ENCODE measurements at regions of chr1 and their contacts with region 1.

Region 1: DNA sequence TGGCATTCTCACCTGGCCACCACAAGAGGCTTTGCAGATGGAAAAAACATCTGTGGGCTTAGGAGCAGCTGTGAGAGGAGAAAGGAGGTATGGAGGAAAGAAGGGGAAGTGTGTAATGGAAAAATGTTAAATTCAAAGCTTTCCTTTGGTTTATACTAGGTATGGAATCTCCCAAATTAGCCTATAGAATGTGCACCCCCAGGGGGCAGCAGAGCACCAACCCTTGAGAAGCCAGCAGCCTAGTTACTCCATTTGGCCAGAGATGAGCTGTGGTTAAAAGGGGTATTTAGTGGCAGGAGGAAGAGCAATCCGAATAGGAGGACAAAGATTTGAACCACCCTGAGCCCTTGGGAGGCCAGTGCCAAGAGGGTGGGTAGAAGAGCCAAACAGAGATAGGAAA is 97.5 kb upstream of the CTTNBP2NL start:
- DNase-seq: peak; percentile 79
- ATAC-seq: peak; percentile 90
- H3K4me3 Mint-ChIP-seq: no peak overlapping the region
- H3K27ac Mint-ChIP-seq: no peak overlapping the region
- H3K4me1 Mint-ChIP-seq: no peaks in the 10 kb centered on the region
- H3K27me3 Mint-ChIP-seq: no peaks in the 10 kb centered on the region; the same call in 1 of the 2 replicates
- CTCF ChIP-seq: peak; percentile 65

Region 2: GRCh38 chr1:112272101-112272772 is 26.3 kb before region 1 on chr1:
- CTCF ChIA-PET with region 1: interaction called, 39 read pairs
- POLR2A ChIA-PET with region 1: no interaction called
- DNase-seq: no peak
- ATAC-seq: no peak
- H3K4me3 Mint-ChIP-seq: no peak overlapping the region
- H3K27ac Mint-ChIP-seq: no peak overlapping the region
- H3K4me1 Mint-ChIP-seq: no peaks in the 10 kb centered on the region
- H3K27me3 Mint-ChIP-seq: peaks cover 24% of the 10 kb centered on the region
- CTCF ChIP-seq: no peak

Region 3: GRCh38 chr1:112312315-112312714 is 13.8 kb after region 1 on chr1:
- CTCF ChIA-PET with region 1: interaction called, 33 read pairs
- POLR2A ChIA-PET with region 1: no interaction called
- DNase-seq: no peak
- ATAC-seq: peak; percentile 43; the same call in 1 of the 2 replicates
- H3K4me3 Mint-ChIP-seq: no peak overlapping the region
- H3K27ac Mint-ChIP-seq: no peak overlapping the region
- H3K4me1 Mint-ChIP-seq: peaks cover 27% of the 10 kb centered on the region
- H3K27me3 Mint-ChIP-seq: no peaks in the 10 kb centered on the region; the same call in 1 of the 2 replicates
- CTCF ChIP-seq: no peak

Region 4: GRCh38 chr1:112337028-112337531 is 38.5 kb after region 1 on chr1:
- CTCF ChIA-PET with region 1: interaction called, 49 read pairs
- POLR2A ChIA-PET with region 1: no interaction called
- DNase-seq: peak; percentile 44
- ATAC-seq: peak; percentile 80
- H3K4me3 Mint-ChIP-seq: no peak overlapping the region
- H3K27ac Mint-ChIP-seq: no peak overlapping the region
- H3K4me1 Mint-ChIP-seq: no peaks in the 10 kb centered on the region; the same call in 1 of the 2 replicates
- H3K27me3 Mint-ChIP-seq: no peaks in the 10 kb centered on the region; the same call in 1 of the 2 replicates
- CTCF ChIP-seq: peak; percentile 39

Region 5: GRCh38 chr1:112369392-112370285 is 71.1 kb after region 1 on chr1:
- CTCF ChIA-PET with region 1: interaction called, 25 read pairs
- POLR2A ChIA-PET with region 1: interaction called, 3 read pairs
- DNase-seq: peak; percentile 95
- ATAC-seq: peak; percentile 100
- H3K4me3 Mint-ChIP-seq: no peak overlapping the region
- H3K27ac Mint-ChIP-seq: no peak overlapping the region
- H3K4me1 Mint-ChIP-seq: 0 out of 2 replicates have a peak, but pooled peaks cover 2% of the 10 kb centered on the region
- H3K27me3 Mint-ChIP-seq: peaks cover 10% of the 10 kb centered on the region
- CTCF ChIP-seq: peak; percentile 92

Region 6: DNA sequence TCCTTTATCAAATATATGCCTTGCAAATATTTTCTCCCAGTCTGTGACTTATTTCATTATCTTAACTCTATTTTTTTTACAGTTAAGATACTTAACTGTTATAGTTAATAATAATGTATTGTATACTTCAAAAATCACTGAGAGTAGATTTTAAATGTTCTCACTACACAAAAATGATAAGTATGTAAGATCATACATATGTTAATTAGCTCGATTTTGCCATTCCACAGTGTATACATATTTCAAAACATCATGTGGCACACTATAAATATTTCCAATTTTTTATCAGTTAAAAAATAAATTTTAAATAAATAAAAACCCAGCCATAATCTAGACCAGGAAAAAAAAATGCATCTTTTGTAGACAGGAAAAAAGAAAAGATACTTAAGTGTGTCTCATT is 124.6 kb after region 1 on chr1:
- CTCF ChIA-PET with region 1: no interaction called
- POLR2A ChIA-PET with region 1: no interaction called
- DNase-seq: no peak
- ATAC-seq: no peak
- H3K4me3 Mint-ChIP-seq: no peak overlapping the region
- H3K27ac Mint-ChIP-seq: no peak overlapping the region
- H3K4me1 Mint-ChIP-seq: peaks cover 9% of the 10 kb centered on the region
- H3K27me3 Mint-ChIP-seq: no peaks in the 10 kb centered on the region
- CTCF ChIP-seq: no peak